Activated T-helper 1 cell treated with anti-CD3 and anti-CD28 coated beads, Interleukin-12 subunit alpha, Interleukin-12 subunit beta, Interleukin-2, Interleukin-4 antibody, amounts not matched to agents 30 ng/mL and 10 ng/mL and 1 ng/mL, durations not matched to agents 14 hours and 24 hours and 36 hours (primary cell): ENCODE measurements at regions of chr15 and their contacts with region 1.

Region 1: DNA sequence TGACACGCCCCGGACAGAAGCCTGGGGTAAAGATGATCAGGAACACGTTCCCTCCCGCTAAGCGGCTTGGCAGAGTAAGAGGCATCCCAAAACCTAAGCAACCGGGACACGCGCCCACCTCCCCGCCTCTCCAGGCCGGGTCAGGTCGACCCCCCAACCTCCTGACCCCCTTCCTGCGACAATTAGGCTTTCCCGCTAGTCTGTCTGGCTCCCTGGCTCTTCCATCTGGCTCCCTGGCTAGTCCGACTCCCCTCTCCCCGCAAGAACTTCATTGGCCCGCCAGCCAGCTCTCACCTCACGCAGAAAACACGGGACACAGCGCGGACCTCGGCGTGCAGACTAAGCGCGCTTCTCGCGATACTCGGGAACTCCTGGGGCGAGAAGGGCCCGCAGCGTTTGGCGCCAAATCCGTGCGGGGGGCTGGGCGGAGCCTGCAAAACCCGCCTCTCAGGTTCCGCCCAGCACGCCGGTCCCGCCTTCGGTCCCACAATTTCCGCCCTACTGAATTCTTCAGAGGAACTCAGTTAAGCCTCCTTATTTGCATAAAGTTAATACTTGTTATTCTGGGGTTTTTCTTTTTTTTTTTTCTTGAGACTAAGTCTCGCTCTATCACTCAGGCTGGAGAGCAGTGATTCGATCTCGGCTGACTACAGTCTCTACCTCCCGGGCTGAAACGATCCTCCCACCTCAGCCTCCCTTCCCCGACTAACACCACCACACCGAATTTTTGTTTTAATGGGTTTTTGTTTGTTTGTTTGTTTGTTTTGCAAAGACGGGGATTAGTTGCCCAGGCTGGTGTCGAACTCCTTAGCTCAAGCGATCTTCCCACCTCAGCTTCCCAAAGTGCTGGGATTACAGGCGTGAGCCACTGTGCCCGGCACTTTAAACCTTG is at the start of gene TIPIN:
- DNase-seq: peak; percentile 96
- H3K4me3 Mint-ChIP-seq: peak within 1 kb of the TSS; percentile 96
- H3K27ac Mint-ChIP-seq: peak within 1 kb of the TSS; percentile 97
- H3K4me1 Mint-ChIP-seq: peaks cover 35% of the 10 kb centered on the region
- H3K27me3 Mint-ChIP-seq: no peaks in the 10 kb centered on the region
- total RNA-seq, gene TIPIN: 49.2 and 56.0 TPM in 2 replicates

Region 2: GRCh38 chr15:65304389-65305144 is 1052.0 kb before region 1 on chr15 and contains the start of gene RNU5B-1:
- intact Hi-C with region 1: loop called (anchors 1 kb)
- DNase-seq: peak; percentile 84
- H3K4me3 Mint-ChIP-seq: peak within 1 kb of the TSS; percentile 94
- H3K27ac Mint-ChIP-seq: peak within 1 kb of the TSS; percentile 95
- H3K4me1 Mint-ChIP-seq: peaks cover 28% of the 10 kb centered on the region
- H3K27me3 Mint-ChIP-seq: peaks cover 9% of the 10 kb centered on the region
- total RNA-seq, gene RNU5B-1: not detected in 2 replicates

Region 3: GRCh38 chr15:66328721-66329220 is 27.8 kb before region 1 on chr15:
- intact Hi-C with region 1: no loop called
- DNase-seq: no peak
- H3K4me3 Mint-ChIP-seq: no peak overlapping the region
- H3K27ac Mint-ChIP-seq: no peak overlapping the region
- H3K4me1 Mint-ChIP-seq: no peaks in the 10 kb centered on the region
- H3K27me3 Mint-ChIP-seq: no peaks in the 10 kb centered on the region

Region 4: GRCh38 chr15:66369773-66370651 is 13.4 kb after region 1 on chr15:
- intact Hi-C with region 1: loop called (anchors 1 kb)
- DNase-seq: peak; percentile 34
- H3K4me3 Mint-ChIP-seq: peak overlapping the region; percentile 78
- H3K27ac Mint-ChIP-seq: peak overlapping the region; percentile 97
- H3K4me1 Mint-ChIP-seq: peaks cover 24% of the 10 kb centered on the region
- H3K27me3 Mint-ChIP-seq: no peaks in the 10 kb centered on the region

Region 5: DNA sequence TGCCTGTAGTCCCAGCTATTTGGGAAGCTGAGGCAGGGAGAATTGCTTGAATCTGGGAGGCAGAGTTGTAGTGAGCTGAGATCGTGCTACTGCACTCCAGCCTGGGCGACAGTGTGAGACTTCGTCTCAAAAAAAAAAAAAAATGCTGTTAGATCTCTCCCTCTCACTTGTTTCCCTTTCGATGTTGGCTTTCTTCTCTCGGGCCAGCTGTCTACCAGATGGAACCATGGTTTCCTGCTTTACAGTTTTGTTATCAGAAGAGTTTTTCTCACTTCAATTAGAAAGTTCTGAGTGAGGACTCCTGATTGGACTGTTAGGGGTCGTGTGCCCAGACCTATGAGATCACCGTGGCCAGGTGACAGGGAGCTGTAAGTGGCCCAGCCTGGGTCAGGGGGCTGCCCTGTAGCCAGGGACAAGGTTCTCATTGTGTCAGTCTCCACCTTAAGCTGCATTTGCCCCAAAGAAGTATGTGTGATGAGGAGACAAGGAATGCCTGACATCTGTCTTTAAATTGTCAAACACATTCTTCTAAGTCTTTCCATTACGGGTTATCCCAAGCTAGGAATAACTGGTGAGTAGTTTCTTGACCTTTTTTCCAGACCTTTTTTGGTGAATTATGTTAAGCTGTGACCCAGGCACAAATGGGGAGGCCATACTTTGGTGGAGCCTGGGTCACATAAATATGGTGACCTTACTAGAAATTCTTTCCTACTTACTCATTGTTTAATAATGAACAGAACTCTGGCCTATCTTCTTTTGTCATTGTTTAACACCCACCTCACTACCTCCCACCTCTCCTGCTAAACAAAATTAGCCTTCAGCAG is 115.8 kb after region 1 on chr15:
- intact Hi-C with region 1: loop called (anchors 1 kb)
- DNase-seq: peak; percentile 52
- H3K4me3 Mint-ChIP-seq: peak overlapping the region; percentile 1
- H3K27ac Mint-ChIP-seq: peak overlapping the region; percentile 80
- H3K4me1 Mint-ChIP-seq: peaks cover 61% of the 10 kb centered on the region
- H3K27me3 Mint-ChIP-seq: no peaks in the 10 kb centered on the region

Region 6: DNA sequence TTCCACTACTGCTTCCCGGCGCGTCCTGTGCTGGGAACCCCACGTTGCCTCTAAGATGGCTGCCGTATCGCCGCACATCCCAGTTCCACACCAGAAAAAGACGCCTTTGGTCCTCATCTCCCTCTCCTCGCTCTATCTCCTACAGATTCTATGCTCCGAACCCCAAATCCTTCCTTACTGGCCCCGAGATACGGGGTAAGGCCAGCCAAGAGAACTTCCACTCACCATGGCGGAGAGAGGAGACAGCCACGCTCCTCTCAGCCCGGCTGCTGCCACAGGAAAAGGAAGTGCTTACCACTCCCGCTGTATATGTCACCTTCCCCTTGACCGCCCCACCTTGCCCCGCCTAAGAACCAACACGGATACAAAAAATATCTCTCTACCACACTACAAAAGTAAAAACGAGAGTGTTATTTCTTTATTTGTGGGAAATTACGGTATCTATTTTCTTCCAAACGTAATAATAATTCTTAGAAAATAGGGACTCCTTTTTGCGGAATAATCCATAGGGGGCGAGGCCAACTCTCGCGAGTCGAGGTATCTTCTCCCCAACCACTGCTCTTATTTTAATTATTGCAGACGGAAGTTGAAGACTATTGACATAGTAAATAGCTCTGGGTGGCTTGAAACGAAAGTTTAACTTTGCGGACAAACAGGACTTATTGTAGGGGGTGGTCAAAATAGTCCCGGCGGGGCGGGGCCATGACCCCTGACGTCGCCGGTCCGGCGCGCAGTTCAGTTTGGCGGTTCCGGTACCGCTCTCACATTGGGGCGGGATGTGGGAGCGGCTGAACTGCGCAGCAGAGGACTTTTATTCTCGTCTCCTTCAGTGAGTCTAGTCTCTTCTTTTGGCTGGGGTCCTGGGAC is 148.2 kb after region 1 on chr15 and contains the starts of genes RPL4 and ZWILCH:
- intact Hi-C with region 1: loop called (anchors 1 kb)
- DNase-seq: peak; percentile 77
- H3K4me3 Mint-ChIP-seq: peak within 1 kb of the TSS; percentile 99
- H3K27ac Mint-ChIP-seq: peak within 1 kb of the TSS; percentile 99
- H3K4me1 Mint-ChIP-seq: peaks cover 55% of the 10 kb centered on the region
- H3K27me3 Mint-ChIP-seq: no peaks in the 10 kb centered on the region
- total RNA-seq, gene RPL4: 3,069 and 3,091 TPM in 2 replicates
- total RNA-seq, gene ZWILCH: 37.5 and 42.2 TPM in 2 replicates